Heart right ventricle (tissue), 16 donors: ENCODE measurements at regions of chr12 and their contacts with region 1.

Region 1: DNA sequence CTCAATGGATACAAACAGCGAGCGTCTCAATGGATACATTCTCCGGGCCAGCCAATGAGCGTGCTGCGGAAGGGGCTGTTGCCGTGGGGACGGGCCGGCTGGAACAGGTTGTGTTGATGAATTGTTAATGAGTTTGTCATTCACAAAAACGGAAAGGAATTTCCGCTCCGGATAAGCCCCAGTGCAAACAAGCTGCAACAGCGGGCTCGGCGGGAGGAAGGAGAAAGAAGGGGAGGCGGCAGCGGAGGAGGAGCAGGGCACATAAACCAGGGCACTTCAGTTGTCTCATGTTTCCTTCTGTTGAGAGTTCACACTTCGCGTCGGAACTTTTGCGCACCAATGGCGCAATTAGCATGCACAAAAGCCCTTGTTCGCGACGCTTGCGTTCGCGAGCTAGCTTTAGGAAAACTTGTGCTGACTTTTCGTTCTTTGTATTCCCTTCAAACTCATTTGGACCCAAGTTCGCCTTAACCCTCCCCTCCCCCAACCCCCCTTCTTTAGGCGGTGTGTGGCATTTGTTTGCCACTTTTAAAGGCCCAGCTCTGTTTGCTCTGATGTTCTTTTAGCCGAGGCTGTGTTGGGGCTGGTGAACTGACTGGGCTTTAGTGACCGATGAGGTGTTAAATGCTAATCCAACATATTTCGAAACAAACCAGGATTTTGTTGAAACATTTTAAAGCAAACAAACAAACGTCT is at the start of gene DUSP6:
- DNase-seq: peak; percentile 90 to 96
- ATAC-seq: peak; percentile 72 to 89 (median 85)
- H3K4me3 ChIP-seq: peak within 1 kb of the TSS; percentile 66 to 94 (median 82)
- H3K27ac ChIP-seq: peak within 1 kb of the TSS; percentile 92 to 100 (median 99)
- H3K4me1 ChIP-seq: peaks cover 0 to 53% (median 41%) of the 10 kb centered on the region in 9 donors
- H3K27me3 ChIP-seq: no peaks in the 10 kb centered on the region
- CTCF ChIP-seq: no peak
- total RNA-seq, gene DUSP6: 19.7 to 43.4 (median 26.0) TPM

Region 2: GRCh38 chr12:89059721-89060541 is 292.7 kb before region 1 on chr12:
- intact Hi-C with region 1: loop called in 5 of 10 experiments (anchors 2 to 10 kb)
- DNase-seq: no peak
- ATAC-seq: peak in 5 of 8 donors; percentile 29 to 57 (median 41)
- H3K4me3 ChIP-seq: no peak overlapping the region
- H3K27ac ChIP-seq: peak overlapping the region in 1 of 10 donors; percentile 7
- H3K4me1 ChIP-seq: peaks cover 0 to 16% (median 6%) of the 10 kb centered on the region in 9 donors
- H3K27me3 ChIP-seq: no peaks in the 10 kb centered on the region
- CTCF ChIP-seq: no peak

Region 3: GRCh38 chr12:89162704-89163261 is 189.9 kb before region 1 on chr12:
- intact Hi-C with region 1: loop called in 5 of 10 experiments (anchors 5 to 10 kb)
- DNase-seq: peak in 1 of 2 donors; percentile 65
- ATAC-seq: peak; percentile 77 to 91 (median 79)
- H3K4me3 ChIP-seq: no peak overlapping the region
- H3K27ac ChIP-seq: peak overlapping the region; percentile 31 to 93 (median 68)
- H3K4me1 ChIP-seq: peaks cover 0 to 88% (median 42%) of the 10 kb centered on the region in 9 donors
- H3K27me3 ChIP-seq: no peaks in the 10 kb centered on the region
- CTCF ChIP-seq: no peak

Region 4: GRCh38 chr12:89326239-89327040 is 26.2 kb before region 1 on chr12:
- intact Hi-C with region 1: loop called in 1 of 10 experiments (anchors 1 kb)
- DNase-seq: no peak
- ATAC-seq: peak in 6 of 8 donors; percentile 33 to 74 (median 48)
- H3K4me3 ChIP-seq: no peak overlapping the region
- H3K27ac ChIP-seq: peak overlapping the region in 4 of 10 donors; percentile 25 to 47 (median 38)
- H3K4me1 ChIP-seq: peaks cover 0 to 29% (median 20%) of the 10 kb centered on the region in 9 donors
- H3K27me3 ChIP-seq: no peaks in the 10 kb centered on the region
- CTCF ChIP-seq: no peak

Region 5: GRCh38 chr12:89389755-89390661 is 37.4 kb after region 1 on chr12:
- intact Hi-C with region 1: loop called in 3 of 10 experiments (anchors 5 kb)
- DNase-seq: no peak
- ATAC-seq: peak; percentile 46 to 94 (median 84)
- H3K4me3 ChIP-seq: no peak overlapping the region
- H3K27ac ChIP-seq: peak overlapping the region; percentile 32 to 79 (median 60)
- H3K4me1 ChIP-seq: peaks cover 3 to 62% (median 36%) of the 10 kb centered on the region in 9 donors
- H3K27me3 ChIP-seq: no peaks in the 10 kb centered on the region
- CTCF ChIP-seq: no peak

Region 6: DNA sequence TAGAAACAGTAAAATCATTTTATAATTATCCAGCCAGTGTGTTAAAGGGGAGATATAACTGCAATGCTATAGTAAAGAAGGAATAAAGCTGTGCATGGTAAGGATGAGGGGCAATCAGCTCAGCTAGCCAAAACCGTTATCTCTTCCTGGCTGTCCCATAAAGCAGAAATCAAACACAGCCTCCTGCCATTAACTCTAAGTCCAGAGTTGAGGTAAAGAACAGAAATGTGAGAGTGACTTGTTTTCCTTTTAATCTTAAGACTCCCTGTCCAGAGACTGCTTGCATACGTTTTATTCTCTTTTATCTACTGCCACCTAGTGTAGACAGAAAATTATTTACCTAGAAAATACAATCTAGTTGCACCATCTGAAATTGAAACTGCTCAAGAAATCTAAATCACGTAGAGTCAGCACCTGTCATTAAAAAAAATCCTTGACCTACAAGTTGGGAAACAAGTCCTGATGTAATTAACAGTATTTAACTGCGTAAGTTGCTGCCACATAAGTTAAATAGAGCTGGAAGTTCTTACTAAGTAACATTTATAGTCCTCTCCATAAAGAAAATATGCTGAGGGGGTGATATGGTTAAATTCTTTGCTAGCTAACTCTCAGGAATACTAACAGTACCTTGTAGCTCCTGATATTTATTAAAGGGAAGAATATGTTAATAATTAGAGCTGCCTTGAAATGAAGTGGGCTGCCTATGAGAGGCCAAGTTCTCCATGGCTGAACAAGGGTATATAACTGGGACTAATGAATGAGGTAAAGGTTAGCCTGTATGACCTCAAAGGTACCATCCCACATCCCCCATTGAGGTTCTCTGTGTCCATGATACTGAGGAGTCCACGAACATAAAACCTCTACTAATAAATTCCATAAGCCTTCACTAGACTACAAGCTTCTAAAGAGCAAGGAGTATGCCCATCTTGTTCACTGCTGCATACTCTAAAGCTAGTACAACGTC is 109.3 kb after region 1 on chr12:
- intact Hi-C with region 1: loop called in 5 of 10 experiments (anchors 2 to 10 kb)
- DNase-seq: no peak
- ATAC-seq: peak; percentile 70 to 96 (median 91)
- H3K4me3 ChIP-seq: peak overlapping the region in 6 of 10 donors; percentile 8 to 34 (median 20)
- H3K27ac ChIP-seq: peak overlapping the region in 9 of 10 donors; percentile 5 to 66 (median 41)
- H3K4me1 ChIP-seq: peaks cover 0 to 19% (median 11%) of the 10 kb centered on the region in 9 donors
- H3K27me3 ChIP-seq: no peaks in the 10 kb centered on the region
- CTCF ChIP-seq: peak; percentile 43 to 74 (median 60)